Activated B cell treated with CpG ODN at 0.5 μM for 24 hours (primary cell): ENCODE measurements at regions of chr6 and their contacts with region 1.

Region 1: GRCh38 chr6:132813173-132813856 is 1.1 kb upstream of the RPS12 start:
- DNase-seq: peak; percentile 33
- ATAC-seq: peak; percentile 17
- H3K4me3 Mint-ChIP-seq: peak overlapping the region; percentile 98
- H3K27ac Mint-ChIP-seq: peak overlapping the region; percentile 99
- H3K4me1 Mint-ChIP-seq: peaks cover 47% of the 10 kb centered on the region
- H3K27me3 Mint-ChIP-seq: no peaks in the 10 kb centered on the region
- CTCF ChIP-seq: no peak

Region 2: DNA sequence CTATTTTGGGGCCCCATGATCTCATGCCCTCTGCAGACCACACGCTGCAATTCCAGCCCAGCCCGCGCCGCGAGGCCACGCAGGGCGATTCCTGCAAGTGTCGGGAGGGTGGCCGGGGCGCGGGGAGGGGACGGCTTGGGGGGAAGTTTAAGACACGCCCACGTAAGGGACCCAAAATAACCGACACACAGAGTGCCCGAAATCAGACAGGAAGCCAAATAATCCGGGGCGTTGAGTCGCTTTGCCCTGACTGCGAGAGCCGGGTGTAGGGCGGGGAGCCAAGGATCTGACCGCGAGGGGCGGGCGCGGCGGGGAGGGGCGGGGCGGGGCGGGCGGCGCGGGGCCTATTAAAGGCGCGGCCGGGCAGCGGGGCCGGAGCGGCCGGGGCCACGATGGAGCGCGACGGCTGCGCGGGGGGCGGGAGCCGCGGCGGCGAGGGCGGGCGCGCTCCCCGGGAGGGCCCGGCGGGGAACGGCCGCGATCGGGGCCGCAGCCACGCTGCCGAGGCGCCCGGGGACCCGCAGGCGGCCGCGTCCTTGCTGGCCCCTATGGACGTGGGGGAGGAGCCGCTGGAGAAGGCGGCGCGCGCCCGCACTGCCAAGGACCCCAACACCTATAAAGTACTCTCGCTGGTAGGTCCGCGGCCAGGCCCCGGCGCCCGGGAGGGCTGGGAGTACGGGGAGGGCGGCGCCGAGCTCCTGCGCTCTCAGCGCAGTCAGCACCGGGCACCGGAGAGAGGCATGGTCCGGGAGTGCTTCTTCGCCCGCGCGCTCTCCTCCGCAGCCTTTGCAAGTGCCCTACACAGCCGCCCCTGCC is 1005.5 kb before region 1 on chr6 and contains the start of gene ENPP1:
- CTCF ChIA-PET with region 1: no interaction called
- POLR2A ChIA-PET with region 1: no interaction called
- intact Hi-C with region 1: loop called (anchors 5 kb)
- DNase-seq: peak; percentile 45
- ATAC-seq: peak; percentile 79
- H3K4me3 Mint-ChIP-seq: peak within 1 kb of the TSS; percentile 90
- H3K27ac Mint-ChIP-seq: peak within 1 kb of the TSS; percentile 42
- H3K4me1 Mint-ChIP-seq: peaks cover 16% of the 10 kb centered on the region
- H3K27me3 Mint-ChIP-seq: peaks cover 32% of the 10 kb centered on the region
- CTCF ChIP-seq: no peak
- total RNA-seq, gene ENPP1: 0.27 and 1.3 TPM in 2 replicates

Region 3: GRCh38 chr6:132401120-132401945 is 412.0 kb before region 1 on chr6 and contains the start of gene MOXD1:
- CTCF ChIA-PET with region 1: no interaction called
- POLR2A ChIA-PET with region 1: no interaction called
- intact Hi-C with region 1: loop called (anchors 5 kb)
- DNase-seq: peak; percentile 61
- ATAC-seq: peak; percentile 77
- H3K4me3 Mint-ChIP-seq: peak within 1 kb of the TSS; percentile 88
- H3K27ac Mint-ChIP-seq: peak within 1 kb of the TSS; percentile 42
- H3K4me1 Mint-ChIP-seq: peaks cover 31% of the 10 kb centered on the region
- H3K27me3 Mint-ChIP-seq: peaks cover 7% of the 10 kb centered on the region
- CTCF ChIP-seq: no peak
- total RNA-seq, gene MOXD1: 3.2 and 3.7 TPM in 2 replicates

Region 4: DNA sequence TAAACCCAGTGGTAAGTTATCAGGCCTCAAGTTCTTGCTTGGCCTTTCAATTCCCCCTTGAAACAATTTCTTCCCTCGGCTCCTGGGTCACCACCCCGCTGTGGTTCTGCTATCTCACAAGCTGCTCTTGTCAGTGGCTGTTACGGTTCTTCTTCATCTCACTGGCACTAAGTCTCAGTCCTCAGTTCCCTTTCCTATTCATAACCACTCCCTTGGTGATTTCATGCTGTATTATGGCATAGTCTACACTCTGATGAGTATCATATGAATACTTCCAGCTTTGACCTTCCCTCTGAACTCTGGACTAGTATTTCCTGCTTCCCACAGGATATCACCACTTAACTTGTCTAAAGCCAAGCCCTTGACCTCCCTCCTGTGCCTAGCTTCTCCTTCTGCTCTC is 162.3 kb before region 1 on chr6:
- CTCF ChIA-PET with region 1: no interaction called
- POLR2A ChIA-PET with region 1: no interaction called
- intact Hi-C with region 1: no loop called
- DNase-seq: no peak
- ATAC-seq: no peak
- H3K4me3 Mint-ChIP-seq: no peak overlapping the region
- H3K27ac Mint-ChIP-seq: no peak overlapping the region
- H3K4me1 Mint-ChIP-seq: no peaks in the 10 kb centered on the region
- H3K27me3 Mint-ChIP-seq: no peaks in the 10 kb centered on the region
- CTCF ChIP-seq: no peak

Region 5: DNA sequence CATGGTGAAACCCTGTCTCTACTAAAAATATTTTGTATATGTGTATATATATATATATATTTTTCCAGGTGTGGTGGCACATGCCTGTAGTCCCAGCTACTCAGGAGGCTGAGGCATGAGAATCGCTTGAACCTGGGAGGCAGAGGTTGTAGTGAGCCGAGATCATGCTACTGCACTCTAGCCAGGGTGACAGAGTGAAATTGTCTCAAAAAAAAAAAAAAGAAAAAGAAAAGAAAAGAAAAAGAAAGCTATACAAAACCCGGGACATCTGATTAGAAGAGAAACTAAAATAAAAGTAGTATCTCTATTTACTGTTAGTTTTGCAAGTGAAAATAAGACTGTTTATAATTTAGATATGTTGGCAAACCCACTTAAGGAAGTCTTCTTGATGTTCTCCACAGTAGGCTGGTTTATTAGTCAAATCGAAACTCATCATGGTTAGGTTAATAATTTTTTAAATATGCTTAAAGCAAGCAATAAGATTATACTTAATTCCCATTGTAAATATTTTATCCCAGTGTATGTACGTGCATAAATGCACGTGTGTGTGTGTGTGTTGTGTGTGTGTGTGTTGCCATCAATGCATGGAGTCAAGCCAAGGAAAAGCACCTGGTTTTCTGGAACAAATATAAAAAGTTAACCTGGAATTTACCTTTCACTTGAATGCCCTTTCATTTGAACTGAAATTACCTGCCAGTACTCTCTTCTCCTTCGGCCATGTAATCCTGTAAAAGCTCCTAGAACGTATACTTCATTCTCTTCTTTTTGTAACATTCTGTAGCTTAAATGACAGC is 62.7 kb before region 1 on chr6:
- CTCF ChIA-PET with region 1: no interaction called
- POLR2A ChIA-PET with region 1: interaction called, 10 read pairs
- intact Hi-C with region 1: no loop called
- DNase-seq: no peak
- ATAC-seq: peak; percentile 66
- H3K4me3 Mint-ChIP-seq: peak overlapping the region; percentile 66
- H3K27ac Mint-ChIP-seq: peak overlapping the region; percentile 84
- H3K4me1 Mint-ChIP-seq: peaks cover 42% of the 10 kb centered on the region
- H3K27me3 Mint-ChIP-seq: no peaks in the 10 kb centered on the region
- CTCF ChIP-seq: no peak

Region 6: DNA sequence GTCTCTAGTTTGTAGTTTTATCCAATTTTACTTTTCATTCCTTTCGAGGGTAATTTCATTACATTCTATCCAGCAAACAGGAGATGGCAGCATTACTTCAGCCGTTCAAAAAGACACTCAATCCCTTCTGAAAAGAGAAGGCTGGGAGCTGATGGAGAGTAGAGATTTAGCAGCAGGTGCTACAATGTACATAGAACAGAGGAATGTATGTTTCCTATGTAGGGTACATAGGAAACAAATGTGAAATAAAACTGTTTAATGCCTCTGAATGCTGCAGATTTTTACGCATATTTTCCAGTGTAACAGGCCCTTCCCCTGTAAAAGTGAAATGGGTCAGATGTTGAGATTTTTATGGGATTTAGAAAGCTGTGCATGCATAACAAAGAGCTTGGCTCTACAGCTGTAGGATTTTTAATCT is 17.0 kb after region 1 on chr6:
- CTCF ChIA-PET with region 1: interaction called, 3 read pairs
- POLR2A ChIA-PET with region 1: interaction called, 29 read pairs
- intact Hi-C with region 1: no loop called
- DNase-seq: no peak
- ATAC-seq: no peak
- H3K4me3 Mint-ChIP-seq: no peak overlapping the region
- H3K27ac Mint-ChIP-seq: no peak overlapping the region
- H3K4me1 Mint-ChIP-seq: no peaks in the 10 kb centered on the region
- H3K27me3 Mint-ChIP-seq: no peaks in the 10 kb centered on the region
- CTCF ChIP-seq: no peak